ENCODE measurements at regions of chr2 and their contacts with region 1.

Region 1: GRCh38 chr2:39851651-39852110 is 72.6 kb upstream of the THUMPD2 start:
- DNase-seq: peak; percentile 63
- ATAC-seq: peak; percentile 90
- H3K4me3 ChIP-seq: no peak overlapping the region
- H3K27ac ChIP-seq: no peak overlapping the region
- H3K4me1 ChIP-seq: peaks cover 3% of the 10 kb centered on the region; the same call in 1 of the 2 replicates
- H3K27me3 ChIP-seq: peaks cover 2% of the 10 kb centered on the region; the same call in 1 of the 2 replicates
- CTCF ChIP-seq: no peak
- POLR2A ChIP-seq: no peak
- RAD21 ChIP-seq: peak; percentile 22; the same call in 1 of the 2 replicates

Region 2: GRCh38 chr2:39356922-39357639 is 494.6 kb before region 1 on chr2:
- CTCF ChIA-PET with region 1: no interaction called
- POLR2A ChIA-PET with region 1: no interaction called
- dilution Hi-C with region 1: no loop called
- in situ Hi-C with region 1: no loop called
- intact Hi-C with region 1: no loop called
- DNase-seq: no peak
- ATAC-seq: no peak
- H3K4me3 ChIP-seq: no peak overlapping the region
- H3K27ac ChIP-seq: no peak overlapping the region
- H3K4me1 ChIP-seq: no peaks in the 10 kb centered on the region
- H3K27me3 ChIP-seq: no peaks in the 10 kb centered on the region
- CTCF ChIP-seq: no peak
- POLR2A ChIP-seq: no peak
- RAD21 ChIP-seq: no peak

Region 3: GRCh38 chr2:39837856-39838453 is 13.7 kb before region 1 on chr2:
- CTCF ChIA-PET with region 1: interaction called, 13 read pairs
- POLR2A ChIA-PET with region 1: no interaction called
- dilution Hi-C with region 1: no loop called
- in situ Hi-C with region 1: no loop called
- intact Hi-C with region 1: no loop called
- DNase-seq: peak; percentile 42
- ATAC-seq: peak; percentile 97
- H3K4me3 ChIP-seq: no peak overlapping the region
- H3K27ac ChIP-seq: no peak overlapping the region
- H3K4me1 ChIP-seq: no peaks in the 10 kb centered on the region
- H3K27me3 ChIP-seq: no peaks in the 10 kb centered on the region
- CTCF ChIP-seq: peak; percentile 74
- POLR2A ChIP-seq: no peak
- RAD21 ChIP-seq: peak; percentile 60

Measured in IMR-90 (cell line).